Naive thymus-derived CD8-positive, alpha-beta T cell (primary cell): ENCODE measurements at regions of chr3 and their contacts with region 1.

Region 1: GRCh38 chr3:57755668-57756527 is at the start of gene SLMAP:
- DNase-seq: peak; percentile 86 to 98 (median 95)
- ATAC-seq: peak; percentile 93 to 94
- H3K4me3 Mint-ChIP-seq: peak within 1 kb of the TSS; percentile 91 to 98 (median 94)
- H3K27ac Mint-ChIP-seq: peak within 1 kb of the TSS; percentile 94 to 98 (median 96)
- H3K4me1 Mint-ChIP-seq: peaks cover 4 to 46% (median 37%) of the 10 kb centered on the region in 4 donors
- H3K27me3 Mint-ChIP-seq: no peaks in the 10 kb centered on the region
- polyA plus RNA-seq, gene SLMAP: 19.6 to 24.5 (median 23.7) TPM

Region 2: GRCh38 chr3:57597122-57597923 is 158.6 kb before region 1 on chr3 and contains the start of gene ARF4:
- POLR2A ChIA-PET with region 1: interaction called, 25 read pairs
- DNase-seq: peak; percentile 97 to 100 (median 100)
- ATAC-seq: peak; percentile 84 to 89
- H3K4me3 Mint-ChIP-seq: peak within 1 kb of the TSS; percentile 96 to 99 (median 98)
- H3K27ac Mint-ChIP-seq: peak within 1 kb of the TSS; percentile 97 to 100 (median 99)
- H3K4me1 Mint-ChIP-seq: peaks cover 22 to 59% (median 56%) of the 10 kb centered on the region in 4 donors
- H3K27me3 Mint-ChIP-seq: no peaks in the 10 kb centered on the region
- polyA plus RNA-seq, gene ARF4: 112 to 116 (median 115) TPM

Region 3: GRCh38 chr3:57778494-57778893 is 22.6 kb after region 1 on chr3:
- POLR2A ChIA-PET with region 1: no interaction called
- DNase-seq: no peak
- ATAC-seq: no peak
- H3K4me3 Mint-ChIP-seq: no peak overlapping the region
- H3K27ac Mint-ChIP-seq: peak overlapping the region in 1 of 10 donors; percentile 79
- H3K4me1 Mint-ChIP-seq: peaks cover 14 to 33% (median 29%) of the 10 kb centered on the region in 4 donors
- H3K27me3 Mint-ChIP-seq: no peaks in the 10 kb centered on the region

Region 4: DNA sequence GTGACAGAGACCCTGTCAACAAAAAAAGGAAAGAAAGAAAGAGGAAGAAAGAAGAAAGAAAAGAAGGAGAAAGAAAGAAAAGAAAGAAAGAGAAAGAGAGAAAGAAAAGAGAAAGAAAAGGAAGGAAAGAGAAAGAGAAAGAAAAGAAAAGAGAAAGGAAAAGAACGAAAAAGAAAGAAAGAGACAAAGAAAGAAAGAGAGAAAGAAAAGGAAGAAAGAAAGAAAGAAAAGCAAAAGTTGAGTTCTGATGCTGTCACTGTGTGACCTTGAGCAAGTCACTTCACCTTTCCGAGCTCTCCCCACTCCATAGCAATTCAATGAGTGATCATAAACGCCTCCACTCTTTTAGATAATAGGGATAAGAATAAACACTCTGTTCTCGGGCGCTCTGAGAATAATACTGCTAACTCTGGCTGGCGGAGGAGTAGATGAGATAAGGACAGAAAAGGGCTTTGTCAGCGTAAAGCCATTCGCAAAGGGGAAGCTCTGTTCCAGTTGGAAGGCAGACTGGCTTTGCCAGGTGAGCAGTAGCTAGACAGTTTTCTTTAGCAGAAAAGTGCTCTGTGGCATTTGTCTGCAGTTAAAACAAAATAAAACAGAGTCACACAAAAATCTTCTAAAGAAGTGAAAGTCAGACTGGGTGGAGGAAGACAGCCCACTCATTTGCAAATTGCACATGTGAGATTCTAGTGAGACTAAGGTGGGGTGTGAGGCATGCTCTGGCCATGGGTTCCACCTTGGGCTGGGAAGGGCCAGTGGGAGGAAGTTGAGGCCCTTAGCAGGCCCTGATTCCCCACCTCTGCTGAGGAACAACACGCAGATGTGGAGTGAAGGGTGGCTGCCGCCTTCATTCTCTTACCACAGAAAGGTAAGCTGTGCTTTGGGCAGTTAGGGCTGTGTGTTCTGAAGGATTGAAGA is 242.7 kb after region 1 on chr3:
- POLR2A ChIA-PET with region 1: no interaction called
- DNase-seq: no peak
- ATAC-seq: peak; percentile 25 to 62
- H3K4me3 Mint-ChIP-seq: peak overlapping the region; percentile 57 to 90 (median 72)
- H3K27ac Mint-ChIP-seq: peak overlapping the region in 9 of 10 donors; percentile 22 to 96 (median 72)
- H3K4me1 Mint-ChIP-seq: peaks cover 8 to 23% (median 15%) of the 10 kb centered on the region in 4 donors
- H3K27me3 Mint-ChIP-seq: no peaks in the 10 kb centered on the region